Activated CD8-positive, alpha-beta memory T cell treated with anti-CD3 and anti-CD28 coated beads, Interleukin-2, amount 10 ng/mL, durations not matched to agents 7 days and 5 days (primary cell): ENCODE measurements at regions of chr1 and their contacts with region 1.

Region 1: DNA sequence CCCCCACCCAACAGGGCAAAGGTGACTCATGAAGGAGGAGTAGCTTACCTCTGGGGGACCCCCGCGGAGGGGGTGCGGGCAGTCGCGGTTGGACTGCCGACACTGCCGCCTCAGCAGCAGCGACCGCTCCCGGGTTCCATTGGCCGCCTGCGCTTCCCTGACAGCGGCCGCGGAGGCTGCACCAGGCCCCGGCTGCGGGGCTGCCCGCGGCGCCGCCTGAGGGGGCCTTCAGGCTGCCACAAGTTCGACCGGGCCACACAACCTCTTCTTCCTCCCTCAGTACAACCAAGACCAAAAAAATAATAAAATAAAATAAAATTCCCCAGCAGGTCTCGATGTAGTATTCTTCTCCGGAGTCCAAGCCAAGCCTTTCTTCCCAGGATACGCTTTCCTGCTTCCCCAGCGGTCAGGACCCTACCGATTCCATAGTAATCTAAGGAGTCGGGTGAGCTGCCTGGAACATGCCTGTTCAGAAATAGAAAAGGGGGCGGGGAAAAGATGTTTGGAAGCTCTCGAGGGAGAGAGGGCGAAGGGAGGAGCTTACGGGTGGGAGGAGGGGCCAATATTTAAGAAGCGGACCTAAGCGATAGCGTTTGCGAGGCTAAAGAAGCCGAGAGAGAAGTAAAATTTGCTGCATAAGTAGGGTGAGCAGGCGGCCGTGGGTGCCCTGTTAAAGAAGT is at the start of gene PI4KB:
- DNase-seq: peak; percentile 96
- ATAC-seq: peak; percentile 94
- H3K4me3 Mint-ChIP-seq: peak within 1 kb of the TSS; percentile 91
- H3K27ac Mint-ChIP-seq: peak within 1 kb of the TSS; percentile 93
- H3K4me1 Mint-ChIP-seq: peaks cover 34% of the 10 kb centered on the region
- H3K27me3 Mint-ChIP-seq: no peaks in the 10 kb centered on the region
- total RNA-seq, gene PI4KB: 68.5 to 73.9 TPM

Region 2: DNA sequence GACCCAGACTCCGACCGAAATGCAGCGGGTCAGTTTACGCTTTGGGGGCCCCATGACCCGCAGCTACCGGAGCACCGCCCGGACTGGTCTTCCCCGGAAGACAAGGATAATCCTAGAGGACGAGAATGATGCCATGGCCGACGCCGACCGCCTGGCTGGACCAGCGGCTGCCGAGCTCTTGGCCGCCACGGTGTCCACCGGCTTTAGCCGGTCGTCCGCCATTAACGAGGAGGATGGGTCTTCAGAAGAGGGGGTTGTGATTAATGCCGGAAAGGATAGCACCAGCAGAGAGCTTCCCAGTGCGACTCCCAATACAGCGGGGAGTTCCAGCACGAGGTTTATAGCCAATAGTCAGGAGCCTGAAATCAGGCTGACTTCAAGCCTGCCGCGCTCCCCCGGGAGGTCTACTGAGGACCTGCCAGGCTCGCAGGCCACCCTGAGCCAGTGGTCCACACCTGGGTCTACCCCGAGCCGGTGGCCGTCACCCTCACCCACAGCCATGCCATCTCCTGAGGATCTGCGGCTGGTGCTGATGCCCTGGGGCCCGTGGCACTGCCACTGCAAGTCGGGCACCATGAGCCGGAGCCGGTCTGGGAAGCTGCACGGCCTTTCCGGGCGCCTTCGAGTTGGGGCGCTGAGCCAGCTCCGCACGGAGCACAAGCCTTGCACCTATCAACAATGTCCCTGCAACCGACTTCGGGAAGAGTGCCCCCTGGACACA is 279.3 kb before region 1 on chr1:
- CTCF ChIA-PET with region 1: no interaction called
- DNase-seq: peak; percentile 79
- ATAC-seq: peak; percentile 85
- H3K4me3 Mint-ChIP-seq: peak overlapping the region; percentile 91
- H3K27ac Mint-ChIP-seq: peak overlapping the region; percentile 87
- H3K4me1 Mint-ChIP-seq: peaks cover 36% of the 10 kb centered on the region
- H3K27me3 Mint-ChIP-seq: no peaks in the 10 kb centered on the region

Region 3: DNA sequence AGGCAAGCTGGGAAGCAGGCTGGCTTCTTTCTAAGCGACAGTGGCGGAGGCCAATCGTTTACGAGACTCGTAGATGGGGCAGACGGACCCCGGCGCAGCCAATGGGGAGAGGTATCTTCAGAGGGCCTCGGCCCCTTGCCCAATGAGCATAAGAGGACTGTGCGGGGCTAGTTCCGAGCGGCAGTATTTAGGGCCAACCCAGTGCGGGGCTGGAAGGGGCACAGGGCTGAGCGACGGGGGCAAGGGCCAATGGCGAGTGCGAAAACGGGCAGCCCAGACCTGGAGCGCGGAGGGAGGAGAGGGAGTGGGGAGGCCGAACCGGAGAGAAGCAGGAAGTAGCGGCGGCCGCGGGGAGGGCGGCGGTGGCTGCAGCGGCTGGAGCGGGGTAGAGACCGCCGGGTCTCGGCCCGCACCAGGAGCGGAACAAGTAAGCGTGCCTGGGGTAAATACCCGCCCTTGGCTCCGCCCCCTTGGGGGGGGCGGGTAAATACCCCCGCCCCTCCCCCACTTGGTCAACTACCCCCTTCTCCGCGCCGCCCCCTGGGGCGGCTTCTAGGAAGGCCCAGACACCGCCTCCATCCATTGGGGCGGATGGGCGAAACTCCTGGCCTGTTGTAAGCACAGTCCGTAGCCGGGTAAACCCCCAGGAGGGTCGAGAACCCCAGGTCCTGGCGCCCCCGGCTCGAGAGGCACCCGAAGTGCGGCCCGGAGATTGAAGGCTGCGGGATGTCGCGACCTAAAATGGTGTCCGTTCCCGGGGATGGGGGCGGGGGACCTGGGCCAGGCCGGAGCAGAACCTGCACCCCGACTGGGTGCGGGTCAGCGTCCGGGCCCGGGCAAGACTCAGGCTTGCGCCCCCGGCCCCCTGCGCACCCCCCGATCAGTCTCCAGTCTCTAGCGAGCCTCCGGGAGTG is 45.1 kb before region 1 on chr1 and contains the start of gene ZNF687:
- CTCF ChIA-PET with region 1: interaction called, 11 read pairs
- DNase-seq: peak; percentile 100
- ATAC-seq: peak; percentile 91
- H3K4me3 Mint-ChIP-seq: peak within 1 kb of the TSS; percentile 99
- H3K27ac Mint-ChIP-seq: peak within 1 kb of the TSS; percentile 99
- H3K4me1 Mint-ChIP-seq: peaks cover 30% of the 10 kb centered on the region
- H3K27me3 Mint-ChIP-seq: no peaks in the 10 kb centered on the region
- total RNA-seq, gene ZNF687: 29.9 to 35.7 TPM

Region 4: GRCh38 chr1:151294742-151295462 is 32.5 kb before region 1 on chr1:
- CTCF ChIA-PET with region 1: interaction called, 11 read pairs
- DNase-seq: no peak
- ATAC-seq: no peak
- H3K4me3 Mint-ChIP-seq: no peak overlapping the region
- H3K27ac Mint-ChIP-seq: no peak overlapping the region
- H3K4me1 Mint-ChIP-seq: no peaks in the 10 kb centered on the region
- H3K27me3 Mint-ChIP-seq: no peaks in the 10 kb centered on the region

Region 5: DNA sequence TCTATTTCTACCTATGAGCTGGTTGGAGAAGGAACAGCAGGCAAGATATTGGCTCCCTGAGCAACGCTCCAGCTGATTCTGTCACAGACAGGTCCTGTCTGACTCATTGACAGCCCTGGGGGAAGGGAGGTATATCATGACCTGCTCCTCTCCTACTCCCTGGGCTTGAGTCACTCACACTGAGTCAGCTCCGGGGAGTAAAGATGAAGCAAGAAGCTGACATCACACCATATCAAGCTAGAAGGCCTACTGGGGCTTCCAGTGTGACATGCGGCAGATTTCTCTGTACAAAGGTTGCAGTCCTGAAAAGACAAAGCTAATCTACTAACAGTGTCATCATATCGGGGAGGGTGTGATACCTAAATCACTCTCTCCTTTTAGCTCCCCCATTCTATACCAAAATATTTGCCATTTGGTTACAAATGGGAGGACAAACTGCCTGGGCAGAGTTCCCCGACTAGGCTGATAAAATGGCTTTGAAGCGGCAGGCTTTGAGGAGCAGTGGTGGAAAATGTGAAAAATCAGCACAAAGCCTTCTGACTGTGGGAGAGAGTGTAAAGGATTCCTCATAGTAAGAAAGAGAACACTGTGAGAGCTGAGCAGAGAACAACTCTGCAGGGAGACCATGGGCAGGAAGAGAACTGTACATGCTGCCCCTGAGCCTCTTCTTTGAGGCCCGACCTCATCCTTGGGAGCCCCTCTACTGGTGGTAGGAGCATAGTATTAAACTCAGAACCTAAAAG is 15.6 kb before region 1 on chr1:
- CTCF ChIA-PET with region 1: interaction called, 22 read pairs
- DNase-seq: peak; percentile 86
- ATAC-seq: peak; percentile 100
- H3K4me3 Mint-ChIP-seq: no peak overlapping the region
- H3K27ac Mint-ChIP-seq: peak overlapping the region; percentile 82
- H3K4me1 Mint-ChIP-seq: peaks cover 24% of the 10 kb centered on the region
- H3K27me3 Mint-ChIP-seq: no peaks in the 10 kb centered on the region